RWPE1 (cell line): ENCODE measurements at regions of chr14 and their contacts with region 1.

Region 1: DNA sequence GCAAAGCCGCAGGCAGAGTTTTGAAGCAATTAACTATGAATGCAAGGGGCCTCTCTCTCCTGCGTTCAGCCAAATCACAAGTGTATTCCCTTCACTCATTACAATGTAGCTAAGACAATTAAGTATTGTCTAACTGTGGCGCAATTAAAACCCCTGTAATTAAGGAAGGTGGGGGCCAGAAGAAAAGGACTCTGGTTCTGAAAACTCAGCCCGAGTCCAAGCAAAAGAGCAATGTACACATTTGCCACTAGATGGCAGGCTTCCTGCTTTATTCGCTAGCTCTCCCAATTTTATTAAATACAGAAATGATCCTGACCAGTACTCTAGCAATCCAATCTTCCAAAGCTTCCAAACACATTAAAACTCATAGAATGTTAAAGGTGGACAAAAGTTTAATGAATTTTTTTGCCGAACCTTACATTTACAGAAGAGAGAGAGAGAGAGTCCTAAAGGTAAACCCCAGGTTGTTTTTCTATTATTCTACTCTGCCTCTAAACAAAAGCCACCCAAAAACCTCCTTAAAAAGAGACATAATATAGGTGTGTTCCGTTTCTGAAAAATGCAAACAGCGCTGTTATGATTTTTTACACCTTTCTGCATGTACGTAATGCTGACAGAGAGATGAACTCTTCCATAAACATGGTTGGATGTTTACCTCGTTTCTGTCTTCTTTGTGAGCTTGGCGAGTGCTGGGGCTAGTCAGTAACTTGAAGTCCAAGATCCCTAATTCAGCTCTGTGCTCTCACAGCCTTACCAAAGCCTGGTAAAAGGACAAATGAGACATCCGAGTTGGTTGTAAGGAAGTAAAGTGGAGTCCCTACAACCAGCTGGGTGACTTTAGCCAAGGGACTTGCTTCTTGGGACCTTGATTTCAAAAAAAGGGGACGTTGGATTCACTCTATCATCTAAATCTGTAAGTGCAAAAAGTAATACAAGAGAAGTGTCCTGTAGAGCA is 50.9 kb upstream of the VASH1 start:
- DNase-seq: peak; percentile 59
- H3K27ac ChIP-seq: no peak overlapping the region
- CTCF ChIP-seq: peak; percentile 90

Region 2: DNA sequence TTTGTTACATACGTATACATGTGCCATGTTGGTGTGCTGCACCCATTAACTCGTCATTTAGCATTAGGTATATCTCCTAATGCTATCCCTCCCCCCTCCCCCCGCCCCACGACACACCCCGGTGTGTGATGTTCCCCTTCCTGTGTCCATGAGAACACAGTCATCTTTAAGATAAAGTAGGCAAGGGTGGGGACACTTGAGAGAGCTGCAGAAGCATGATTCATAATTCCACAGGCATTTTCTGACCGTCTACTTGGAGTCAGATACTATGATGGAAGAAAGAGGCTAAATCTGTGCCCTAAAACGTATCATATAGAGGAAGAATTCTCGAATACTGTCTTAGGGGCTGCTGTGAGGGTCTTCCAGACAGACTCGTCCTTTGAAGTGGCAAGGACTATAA is 95.0 kb before region 1 on chr14:
- CTCF ChIA-PET with region 1: no interaction called
- POLR2A ChIA-PET with region 1: no interaction called
- DNase-seq: peak; percentile 35
- H3K27ac ChIP-seq: no peak overlapping the region
- CTCF ChIP-seq: no peak

Region 3: DNA sequence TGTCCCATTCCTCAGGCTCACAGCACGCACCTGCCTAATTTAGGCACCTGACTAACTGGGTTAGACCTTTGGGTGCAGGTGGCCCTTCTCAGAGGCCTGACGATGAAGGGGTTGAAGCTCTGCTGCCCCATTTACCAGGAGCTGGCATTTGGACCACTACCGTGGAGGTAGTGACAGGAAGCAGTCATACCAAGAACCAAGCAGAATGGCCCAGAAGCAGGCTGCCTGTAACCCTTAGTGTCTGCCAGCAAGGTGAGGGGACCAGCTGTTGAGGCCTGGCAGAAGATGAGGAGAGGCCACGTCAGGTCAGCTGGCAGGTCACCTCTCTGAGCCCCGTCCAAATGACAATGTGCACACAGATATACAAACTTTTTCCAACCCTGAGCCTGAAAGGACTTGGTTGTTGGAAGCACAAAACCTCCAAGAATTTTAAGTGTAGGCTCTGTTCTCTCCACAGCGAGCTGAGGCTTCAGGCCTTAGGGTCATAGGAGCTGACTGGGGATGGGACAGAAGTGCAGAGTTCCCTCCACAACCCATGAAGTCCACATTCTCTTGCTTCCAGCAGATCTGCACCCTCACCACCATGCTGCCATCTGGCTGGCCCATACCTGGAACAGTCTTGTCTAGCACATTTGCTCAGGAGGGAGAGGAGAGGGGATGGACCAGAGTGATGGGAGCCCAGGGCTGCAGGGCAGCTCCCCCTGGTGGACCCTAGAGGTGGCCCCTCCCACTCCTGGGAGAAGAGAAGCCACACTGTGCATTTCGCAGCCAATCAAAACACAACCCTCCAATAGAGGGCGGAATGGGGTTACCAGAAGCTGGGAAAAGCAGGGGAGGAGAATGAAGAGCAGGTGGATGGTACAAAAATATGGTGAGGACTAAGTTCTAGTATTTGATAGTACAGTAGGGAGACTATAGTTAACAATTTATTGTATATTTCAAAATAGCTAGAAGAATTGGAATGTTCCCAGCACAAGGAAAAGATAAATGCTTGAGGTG is 74.2 kb after region 1 on chr14:
- CTCF ChIA-PET with region 1: interaction called, 10 read pairs
- POLR2A ChIA-PET with region 1: no interaction called
- DNase-seq: peak; percentile 86
- H3K27ac ChIP-seq: no peak overlapping the region
- CTCF ChIP-seq: peak; percentile 40